ENCODE measurements at regions of chr4 and their contacts with region 1.

Region 1: GRCh38 chr4:147157860-147158701 is 212.4 kb upstream of the TTC29 start:
- DNase-seq: no peak
- H3K4me3 ChIP-seq: peak overlapping the region; percentile 52 to 55
- H3K27ac ChIP-seq: peak overlapping the region; percentile 62 to 81
- H3K4me1 ChIP-seq: peaks cover 0 to 14% (median 7%) of the 10 kb centered on the region in 4 donors
- H3K27me3 ChIP-seq: no peaks in the 10 kb centered on the region
- CTCF ChIP-seq: no peak

Region 2: GRCh38 chr4:146975527-146975926 is 182.6 kb before region 1 on chr4:
- intact Hi-C with region 1: no loop called
- DNase-seq: no peak
- H3K4me3 ChIP-seq: no peak overlapping the region
- H3K27ac ChIP-seq: no peak overlapping the region
- H3K4me1 ChIP-seq: no peaks in the 10 kb centered on the region
- H3K27me3 ChIP-seq: no peaks in the 10 kb centered on the region
- CTCF ChIP-seq: no peak

Region 3: GRCh38 chr4:147590249-147590920 is 432.3 kb after region 1 on chr4:
- intact Hi-C with region 1: loop called (anchors 5 kb)
- DNase-seq: peak in 1 of 2 donors; percentile 68
- H3K4me3 ChIP-seq: no peak overlapping the region
- H3K27ac ChIP-seq: peak overlapping the region in 1 of 2 donors; percentile 36
- H3K4me1 ChIP-seq: peaks cover 0 to 37% (median 7%) of the 10 kb centered on the region in 4 donors
- H3K27me3 ChIP-seq: no peaks in the 10 kb centered on the region
- CTCF ChIP-seq: peak; percentile 77 to 86